ENCODE measurements at regions of chr22 and their contacts with region 1.

Region 1: GRCh38 chr22:22342697-22343580 is 98.4 kb downstream of the VPREB1 start:
- DNase-seq: peak; percentile 77
- ATAC-seq: peak; percentile 100
- H3K4me3 ChIP-seq: no peak overlapping the region
- H3K27ac ChIP-seq: no peak overlapping the region
- H3K4me1 ChIP-seq: peaks cover 0 to 1% of the 10 kb centered on the region in 2 experiments; a peak in 2 of 4 replicates
- H3K27me3 ChIP-seq: peaks cover 25% of the 10 kb centered on the region; the same call in 1 of the 2 replicates
- CTCF ChIP-seq: peak; percentile 46 to 97 (median 95); a peak in 5 of 6 replicates
- POLR2A ChIP-seq: no peak
- RAD21 ChIP-seq: peak; percentile 47

Region 2: DNA sequence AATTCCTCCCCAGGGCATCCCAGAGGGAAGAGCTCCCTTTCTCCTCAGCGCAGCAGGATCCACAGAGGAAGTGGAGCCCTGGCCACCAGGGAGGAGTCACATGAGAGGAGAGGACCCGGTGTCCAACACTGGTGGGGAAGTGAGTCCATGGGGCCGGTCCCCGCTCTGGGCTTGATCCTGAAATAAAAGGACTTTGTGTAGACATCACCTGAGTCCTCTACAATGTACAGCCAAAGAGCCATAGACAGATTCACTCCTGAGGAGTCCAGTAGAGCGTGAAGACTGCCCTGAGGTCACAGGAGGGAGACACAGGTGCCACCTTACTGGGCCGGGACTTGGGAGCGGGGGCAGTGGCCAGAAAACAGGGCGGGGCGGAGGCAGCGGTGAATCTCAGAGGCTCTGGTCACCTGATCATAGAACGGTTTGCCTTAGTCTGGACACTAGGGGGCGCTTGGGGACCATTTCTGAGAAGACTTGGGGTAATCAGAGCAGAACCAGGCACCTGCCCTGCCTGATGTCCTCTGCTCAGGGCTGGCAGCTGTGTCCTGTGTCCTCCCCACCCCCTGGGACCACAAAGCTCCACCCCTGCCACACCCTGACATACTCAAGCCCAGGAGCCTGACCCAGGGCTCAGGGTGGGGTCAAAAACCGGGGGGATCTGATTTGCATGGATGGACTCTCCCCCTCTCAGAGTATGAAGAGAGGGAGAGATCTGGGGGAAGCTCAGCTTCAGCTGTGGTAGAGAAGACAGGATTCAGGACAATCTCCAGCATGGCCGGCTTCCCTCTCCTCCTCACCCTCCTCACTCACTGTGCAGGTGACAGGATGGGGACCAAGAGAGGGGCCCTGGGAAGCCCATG is 14.3 kb after region 1 on chr22:
- CTCF ChIA-PET with region 1: interaction called, 12 read pairs
- POLR2A ChIA-PET with region 1: no interaction called
- RAD21 ChIA-PET with region 1: no interaction called
- intact Hi-C with region 1: no loop called
- DNase-seq: peak; percentile 77
- ATAC-seq: peak; percentile 98
- H3K4me3 ChIP-seq: no peak overlapping the region; a peak in 1 of 4 replicates
- H3K27ac ChIP-seq: no peak overlapping the region
- H3K4me1 ChIP-seq: peaks cover 0 to 7% of the 10 kb centered on the region in 2 experiments; a peak in 1 of 4 replicates
- H3K27me3 ChIP-seq: no peaks in the 10 kb centered on the region
- CTCF ChIP-seq: peak; percentile 59 to 79 (median 66)
- POLR2A ChIP-seq: no peak
- RAD21 ChIP-seq: peak; percentile 65

Region 3: GRCh38 chr22:22616636-22617035 is 273.7 kb after region 1 on chr22:
- CTCF ChIA-PET with region 1: no interaction called
- POLR2A ChIA-PET with region 1: no interaction called
- RAD21 ChIA-PET with region 1: no interaction called
- intact Hi-C with region 1: no loop called
- DNase-seq: no peak
- ATAC-seq: no peak
- H3K4me3 ChIP-seq: no peak overlapping the region
- H3K27ac ChIP-seq: no peak overlapping the region
- H3K4me1 ChIP-seq: no peaks in the 10 kb centered on the region
- H3K27me3 ChIP-seq: no peaks in the 10 kb centered on the region
- CTCF ChIP-seq: no peak
- POLR2A ChIP-seq: no peak
- RAD21 ChIP-seq: no peak

Region 4: DNA sequence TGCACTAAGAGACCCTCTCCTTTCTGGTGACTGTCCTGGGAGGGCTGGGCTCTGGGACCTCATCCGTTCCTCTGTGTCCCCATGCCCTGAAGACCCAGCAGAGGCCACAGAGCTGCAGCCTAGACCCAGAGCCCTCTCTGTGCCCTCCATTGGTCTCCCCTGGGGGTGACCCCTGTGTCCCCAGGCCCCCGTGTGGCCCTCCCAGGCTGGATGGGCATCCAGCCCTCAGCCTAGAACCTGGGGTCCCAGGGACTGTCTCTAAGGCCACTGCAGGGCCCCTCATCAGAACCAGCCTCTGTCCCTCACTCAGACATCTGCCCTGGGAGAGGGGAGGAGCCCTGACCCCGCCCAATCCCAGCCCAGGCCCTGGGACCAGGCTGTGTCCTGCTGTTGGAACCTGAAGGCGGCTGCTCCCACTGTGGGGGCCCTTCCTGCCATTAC is 1231.5 kb after region 1 on chr22:
- CTCF ChIA-PET with region 1: no interaction called
- POLR2A ChIA-PET with region 1: no interaction called
- RAD21 ChIA-PET with region 1: no interaction called
- intact Hi-C with region 1: no loop called
- DNase-seq: no peak
- ATAC-seq: no peak
- H3K4me3 ChIP-seq: no peak overlapping the region
- H3K27ac ChIP-seq: no peak overlapping the region
- H3K4me1 ChIP-seq: no peaks in the 10 kb centered on the region
- H3K27me3 ChIP-seq: no peaks in the 10 kb centered on the region
- CTCF ChIP-seq: no peak
- POLR2A ChIP-seq: no peak
- RAD21 ChIP-seq: no peak